ENCODE measurements at regions of chr1 and their contacts with region 1.

Region 1: GRCh38 chr1:59296358-59297256 is at the start of gene FGGY:
- DNase-seq: peak; percentile 97 to 99
- ATAC-seq: peak; percentile 82 to 88 (median 86)
- H3K4me3 ChIP-seq: peak within 1 kb of the TSS; percentile 71
- H3K27ac ChIP-seq: peak within 1 kb of the TSS; percentile 95
- H3K4me1 ChIP-seq: peaks cover 48% of the 10 kb centered on the region
- H3K27me3 ChIP-seq: no peaks in the 10 kb centered on the region
- CTCF ChIP-seq: no peak
- total RNA-seq, gene FGGY: 46.5 to 72.2 (median 55.8) TPM

Region 2: DNA sequence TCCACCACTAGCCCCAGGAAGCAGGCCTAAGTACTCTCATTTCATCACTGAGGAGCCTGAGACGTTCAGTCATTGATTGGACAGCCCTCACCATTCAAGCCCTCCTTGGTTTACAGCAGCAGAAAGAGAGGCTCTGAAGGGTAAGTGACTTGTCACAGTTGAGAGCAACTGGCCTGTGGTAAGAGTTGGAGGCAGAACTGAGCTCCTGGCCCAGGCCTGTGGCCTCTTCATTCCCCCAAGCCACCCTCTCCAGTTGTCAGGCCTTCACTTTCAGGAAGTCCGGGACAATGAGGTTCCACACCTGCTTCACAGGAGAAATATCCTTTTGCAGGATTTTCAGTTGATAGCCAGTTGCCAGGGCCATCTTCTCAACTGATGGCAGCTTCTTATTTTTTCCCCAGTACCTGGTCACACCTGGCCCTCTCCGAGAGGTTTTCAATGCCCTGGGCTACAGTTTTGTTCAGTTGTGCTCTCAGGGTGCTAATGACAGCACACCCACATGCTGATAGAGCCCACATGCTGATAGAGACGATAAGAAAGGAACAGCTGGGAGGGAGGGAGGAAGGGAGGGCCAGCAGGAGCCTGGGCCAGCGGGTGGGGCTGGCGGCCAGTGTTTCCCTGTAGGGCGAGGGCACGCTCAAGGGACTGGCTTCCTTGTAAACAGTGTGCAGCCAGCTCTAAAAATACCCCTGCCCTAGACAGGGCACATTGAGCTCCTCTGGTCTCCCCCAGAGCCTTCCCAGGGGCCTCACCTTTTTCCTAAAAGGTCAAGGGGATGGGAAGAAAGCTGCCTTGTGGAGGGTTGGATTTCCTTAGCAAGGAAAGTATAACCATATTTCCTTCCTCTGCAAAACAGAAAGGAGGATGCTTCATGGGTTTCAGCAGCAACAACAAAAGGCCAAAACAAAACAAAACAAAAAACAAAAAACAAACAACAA is 400.1 kb before region 1 on chr1:
- intact Hi-C with region 1: loop called (anchors 5 to 10 kb)
- DNase-seq: peak; percentile 73 to 92
- ATAC-seq: peak; percentile 92 to 95 (median 92)
- H3K4me3 ChIP-seq: no peak overlapping the region
- H3K27ac ChIP-seq: peak overlapping the region; percentile 95
- H3K4me1 ChIP-seq: peaks cover 87% of the 10 kb centered on the region
- H3K27me3 ChIP-seq: no peaks in the 10 kb centered on the region
- CTCF ChIP-seq: no peak

Region 3: GRCh38 chr1:58968360-58968952 is 328.2 kb before region 1 on chr1:
- intact Hi-C with region 1: loop called in 1 of 2 experiments (anchors 2 kb)
- DNase-seq: peak; percentile 85 to 93
- ATAC-seq: peak; percentile 36 to 61 (median 54)
- H3K4me3 ChIP-seq: peak overlapping the region; percentile 23
- H3K27ac ChIP-seq: peak overlapping the region; percentile 97
- H3K4me1 ChIP-seq: peaks cover 57% of the 10 kb centered on the region
- H3K27me3 ChIP-seq: no peaks in the 10 kb centered on the region
- CTCF ChIP-seq: peak; percentile 12

Region 4: DNA sequence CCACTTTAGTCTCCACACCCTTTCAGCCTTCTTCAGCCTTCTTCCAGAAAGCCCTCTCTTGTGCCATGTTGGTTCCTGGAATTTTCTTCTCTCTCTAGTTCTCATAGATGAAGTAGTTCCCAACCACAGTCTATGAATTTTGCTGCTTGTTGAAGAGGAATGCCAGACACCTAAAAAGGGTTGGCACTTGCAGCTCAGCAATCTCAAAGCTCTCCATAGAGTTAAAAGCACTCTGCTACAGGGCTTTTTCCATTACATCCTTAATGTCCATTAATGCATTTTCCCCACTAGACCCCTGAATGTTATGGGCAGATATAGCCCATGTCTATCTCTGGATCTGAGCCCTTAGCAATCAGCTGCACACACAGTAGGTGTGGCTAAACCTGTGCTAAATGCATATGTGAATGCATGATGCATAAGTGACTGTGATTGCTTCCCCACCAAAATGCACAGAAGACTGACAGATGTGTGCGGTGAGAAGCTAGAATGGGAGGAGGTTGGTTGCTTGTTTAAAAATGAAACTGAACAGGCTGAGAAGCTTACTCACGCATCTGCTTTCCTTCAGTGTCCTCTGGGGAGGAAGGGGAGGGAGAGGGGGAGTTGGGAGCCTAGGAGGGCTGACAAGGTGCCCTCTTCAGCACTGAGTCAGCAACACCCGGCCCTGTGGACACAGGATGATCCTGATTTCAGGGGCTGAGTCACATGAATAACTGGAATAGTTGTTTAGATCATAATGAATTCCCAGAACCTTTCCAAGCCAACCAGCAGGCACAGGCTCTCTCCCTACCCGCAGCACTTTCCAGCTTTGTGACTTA is 145.8 kb before region 1 on chr1:
- intact Hi-C with region 1: loop called in 1 of 2 experiments (anchors 2 kb)
- DNase-seq: peak; percentile 87 to 94
- ATAC-seq: peak; percentile 92 to 97 (median 95)
- H3K4me3 ChIP-seq: peak overlapping the region; percentile 50
- H3K27ac ChIP-seq: peak overlapping the region; percentile 89
- H3K4me1 ChIP-seq: peaks cover 45% of the 10 kb centered on the region
- H3K27me3 ChIP-seq: no peaks in the 10 kb centered on the region
- CTCF ChIP-seq: no peak

Region 5: DNA sequence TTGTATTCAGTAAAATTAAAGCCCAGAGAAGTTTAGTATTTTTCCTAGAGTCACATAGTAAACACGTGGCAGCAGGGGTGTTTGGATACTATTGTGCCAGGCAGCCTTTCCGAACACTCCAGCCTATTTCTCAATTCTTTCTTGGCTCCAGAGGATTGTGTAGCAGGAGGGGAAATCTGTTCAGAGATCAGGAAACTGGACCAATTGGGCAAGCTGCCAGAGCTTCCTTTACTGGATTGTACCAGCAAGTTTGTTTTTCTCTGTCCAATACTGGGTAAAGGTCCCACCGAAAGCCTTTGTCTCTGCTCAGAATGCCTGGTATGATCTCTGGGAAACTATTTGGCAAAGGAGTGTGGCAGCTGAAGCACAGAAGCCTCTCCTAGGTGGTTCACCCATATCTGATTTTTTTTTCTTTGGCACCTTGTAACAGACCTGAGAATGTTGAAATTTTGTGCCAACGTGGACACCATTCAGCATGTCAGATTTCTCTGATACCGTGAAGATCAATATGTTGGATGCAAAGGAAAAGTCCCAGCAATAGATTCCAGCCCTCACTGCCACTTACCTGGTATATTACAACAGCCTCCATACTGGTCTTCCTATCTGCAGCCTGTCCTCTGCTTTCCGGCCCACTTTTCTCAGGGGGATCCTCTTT is 126.4 kb after region 1 on chr1:
- intact Hi-C with region 1: loop called in 1 of 2 experiments (anchors 10 kb)
- DNase-seq: peak; percentile 74
- ATAC-seq: peak; percentile 32 to 45 (median 41)
- H3K4me3 ChIP-seq: no peak overlapping the region
- H3K27ac ChIP-seq: peak overlapping the region; percentile 90
- H3K4me1 ChIP-seq: peaks cover 74% of the 10 kb centered on the region
- H3K27me3 ChIP-seq: no peaks in the 10 kb centered on the region
- CTCF ChIP-seq: no peak

Region 6: DNA sequence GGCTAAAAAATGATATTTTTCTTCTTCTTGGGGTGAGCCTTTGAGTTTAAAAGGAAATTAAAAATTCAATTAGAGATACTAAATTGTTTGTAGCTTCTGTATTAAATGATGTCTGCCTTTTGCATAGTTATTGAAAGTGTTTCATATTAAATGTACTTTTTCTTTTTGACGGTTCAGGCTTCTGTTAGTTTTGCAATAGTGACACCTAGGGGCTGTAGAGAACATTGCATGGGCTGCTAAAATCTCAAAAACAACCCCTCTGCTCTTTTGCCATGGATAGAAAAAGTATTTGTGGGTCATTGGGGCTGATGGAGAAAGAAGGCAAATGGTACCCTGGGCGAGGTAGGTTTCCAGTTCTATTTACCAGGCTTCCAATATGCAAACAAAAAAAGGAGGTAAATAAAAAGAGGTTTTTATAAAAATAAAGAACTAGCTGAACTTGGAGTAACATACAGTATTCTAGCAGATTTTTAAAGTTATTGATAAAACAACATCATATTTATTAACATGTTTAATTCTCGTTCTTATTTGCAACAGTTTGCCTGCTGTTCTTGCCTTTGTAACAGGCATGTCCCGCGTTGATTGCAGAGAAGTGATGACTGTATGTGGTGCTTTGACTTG is 402.7 kb after region 1 on chr1:
- intact Hi-C with region 1: loop called (anchors 5 kb)
- DNase-seq: no peak
- ATAC-seq: peak; percentile 56 to 68 (median 65)
- H3K4me3 ChIP-seq: peak overlapping the region; percentile 59
- H3K27ac ChIP-seq: peak overlapping the region; percentile 87
- H3K4me1 ChIP-seq: peaks cover 58% of the 10 kb centered on the region
- H3K27me3 ChIP-seq: no peaks in the 10 kb centered on the region
- CTCF ChIP-seq: peak; percentile 96

Measured in psoas muscle (tissue), 8 donors.